Activated CD8-positive, alpha-beta memory T cell treated with anti-CD3 and anti-CD28 coated beads, Interleukin-2, amount 10 ng/mL, durations not matched to agents 7 days and 5 days (primary cell): ENCODE measurements at regions of chr12 and their contacts with region 1.

Region 1: GRCh38 chr12:50174971-50175715 is 8.0 kb upstream of the CERS5 start:
- DNase-seq: no peak
- ATAC-seq: no peak
- H3K4me3 Mint-ChIP-seq: no peak overlapping the region
- H3K27ac Mint-ChIP-seq: no peak overlapping the region
- H3K4me1 Mint-ChIP-seq: no peaks in the 10 kb centered on the region
- H3K27me3 Mint-ChIP-seq: no peaks in the 10 kb centered on the region

Region 2: GRCh38 chr12:50074936-50075807 is 100.0 kb before region 1 on chr12:
- CTCF ChIA-PET with region 1: interaction called, 13 read pairs
- DNase-seq: peak; percentile 86
- ATAC-seq: peak; percentile 95
- H3K4me3 Mint-ChIP-seq: no peak overlapping the region
- H3K27ac Mint-ChIP-seq: peak overlapping the region; percentile 42
- H3K4me1 Mint-ChIP-seq: peaks cover 10% of the 10 kb centered on the region
- H3K27me3 Mint-ChIP-seq: no peaks in the 10 kb centered on the region

Region 3: GRCh38 chr12:50084775-50085614 is 90.1 kb before region 1 on chr12 and contains the start of gene SMARCD1:
- CTCF ChIA-PET with region 1: interaction called, 70 read pairs
- DNase-seq: peak; percentile 90
- ATAC-seq: peak; percentile 86
- H3K4me3 Mint-ChIP-seq: peak within 1 kb of the TSS; percentile 88
- H3K27ac Mint-ChIP-seq: peak within 1 kb of the TSS; percentile 95
- H3K4me1 Mint-ChIP-seq: peaks cover 38% of the 10 kb centered on the region
- H3K27me3 Mint-ChIP-seq: no peaks in the 10 kb centered on the region
- total RNA-seq, gene SMARCD1: 62.0 to 80.8 TPM

Region 4: GRCh38 chr12:50103767-50104321 is 71.3 kb before region 1 on chr12 and contains the start of gene GPD1:
- CTCF ChIA-PET with region 1: interaction called, 12 read pairs
- DNase-seq: no peak
- ATAC-seq: no peak
- H3K4me3 Mint-ChIP-seq: no peak within 1 kb of the TSS
- H3K27ac Mint-ChIP-seq: no peak within 1 kb of the TSS
- H3K4me1 Mint-ChIP-seq: no peaks in the 10 kb centered on the region
- H3K27me3 Mint-ChIP-seq: no peaks in the 10 kb centered on the region
- total RNA-seq, gene GPD1: 0.30 TPM in 1 of 2 experiments, not detected in the other

Region 5: DNA sequence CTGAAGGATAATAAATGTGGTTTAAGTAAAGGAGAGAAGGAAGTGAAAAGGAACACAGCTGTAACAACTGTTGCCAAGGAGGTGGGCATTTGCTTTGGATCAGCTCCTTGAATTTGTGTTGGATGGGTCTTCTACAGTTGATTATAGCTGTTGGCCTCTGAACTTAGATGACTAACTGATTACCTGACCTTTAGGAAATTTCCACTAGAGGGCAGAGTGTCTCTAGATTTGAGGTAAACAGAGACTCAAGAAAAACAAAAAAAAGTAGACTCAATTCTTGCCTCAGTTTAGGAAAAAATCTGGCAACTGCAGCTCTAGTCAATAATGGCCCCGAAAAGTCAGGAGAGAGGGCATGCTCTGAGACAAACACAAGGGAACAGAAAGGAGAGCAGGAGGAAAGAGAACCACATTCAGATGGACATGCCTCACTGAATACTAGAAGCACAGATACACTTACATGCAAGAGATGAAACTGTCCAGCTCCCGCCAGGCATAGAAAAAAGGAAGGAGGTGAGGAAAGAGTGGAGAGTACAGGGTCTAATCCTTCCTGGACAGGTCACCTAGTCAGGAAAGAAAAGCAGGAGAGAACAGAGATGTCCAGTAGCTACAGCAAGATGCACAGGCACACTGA is 42.5 kb before region 1 on chr12:
- CTCF ChIA-PET with region 1: interaction called, 19 read pairs
- DNase-seq: no peak
- ATAC-seq: no peak
- H3K4me3 Mint-ChIP-seq: no peak overlapping the region
- H3K27ac Mint-ChIP-seq: peak overlapping the region; percentile 56
- H3K4me1 Mint-ChIP-seq: peaks cover 9% of the 10 kb centered on the region
- H3K27me3 Mint-ChIP-seq: no peaks in the 10 kb centered on the region